ENCODE measurements at regions of chr6 and their contacts with region 1.

Region 1: DNA sequence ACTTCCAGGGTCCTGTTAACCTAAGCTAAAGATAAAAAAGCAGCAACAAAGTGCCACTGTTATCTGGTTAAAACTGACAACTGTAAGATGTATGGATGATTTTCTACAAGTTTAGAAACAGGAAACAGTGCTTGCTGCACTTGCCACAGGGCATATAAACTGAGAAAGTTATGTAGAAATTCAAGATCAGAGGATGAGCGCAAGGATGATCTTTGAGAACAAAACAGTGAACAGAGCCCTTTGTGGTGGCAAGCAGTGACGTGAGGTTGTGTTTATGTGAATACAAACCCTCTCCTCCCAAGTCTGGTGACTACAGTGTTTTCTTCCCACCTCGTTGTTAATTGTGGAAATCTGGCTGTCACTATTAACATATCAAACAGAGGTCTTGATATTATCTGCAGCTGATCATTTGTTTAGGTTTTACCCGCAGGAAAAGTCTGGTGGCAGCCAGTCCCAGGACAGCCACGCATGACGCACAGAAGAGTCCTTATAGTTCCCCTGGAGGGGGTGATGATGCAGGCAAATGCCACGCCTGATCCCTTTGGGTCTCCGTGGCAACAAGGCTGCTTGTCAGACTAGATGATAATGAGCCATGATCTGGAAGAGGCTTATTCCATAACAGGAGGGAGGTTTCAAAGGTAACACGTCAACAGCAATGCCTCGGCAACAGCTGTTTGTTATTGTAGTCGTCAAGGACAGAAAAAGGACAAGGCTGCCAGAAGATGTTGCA is 43.1 kb upstream of the TNFAIP3 start:
- DNase-seq: peak; percentile 32 to 98 (median 91)
- ATAC-seq: peak; percentile 80 to 91 (median 86)
- H3K4me3 ChIP-seq: peak overlapping the region; percentile 3 to 13
- H3K4me3 Mint-ChIP-seq: peak overlapping the region; percentile 70 to 81 (median 76)
- H3K27ac ChIP-seq: peak overlapping the region; percentile 100
- H3K27ac Mint-ChIP-seq: peak overlapping the region; percentile 95 to 97
- H3K4me1 ChIP-seq: peaks cover 56 to 57% of the 10 kb centered on the region in 2 experiments
- H3K4me1 Mint-ChIP-seq: peaks cover 79 to 90% (median 86%) of the 10 kb centered on the region in 3 donors
- H3K27me3 ChIP-seq: no peaks in the 10 kb centered on the region
- H3K27me3 Mint-ChIP-seq: no peaks in the 10 kb centered on the region

Region 2: DNA sequence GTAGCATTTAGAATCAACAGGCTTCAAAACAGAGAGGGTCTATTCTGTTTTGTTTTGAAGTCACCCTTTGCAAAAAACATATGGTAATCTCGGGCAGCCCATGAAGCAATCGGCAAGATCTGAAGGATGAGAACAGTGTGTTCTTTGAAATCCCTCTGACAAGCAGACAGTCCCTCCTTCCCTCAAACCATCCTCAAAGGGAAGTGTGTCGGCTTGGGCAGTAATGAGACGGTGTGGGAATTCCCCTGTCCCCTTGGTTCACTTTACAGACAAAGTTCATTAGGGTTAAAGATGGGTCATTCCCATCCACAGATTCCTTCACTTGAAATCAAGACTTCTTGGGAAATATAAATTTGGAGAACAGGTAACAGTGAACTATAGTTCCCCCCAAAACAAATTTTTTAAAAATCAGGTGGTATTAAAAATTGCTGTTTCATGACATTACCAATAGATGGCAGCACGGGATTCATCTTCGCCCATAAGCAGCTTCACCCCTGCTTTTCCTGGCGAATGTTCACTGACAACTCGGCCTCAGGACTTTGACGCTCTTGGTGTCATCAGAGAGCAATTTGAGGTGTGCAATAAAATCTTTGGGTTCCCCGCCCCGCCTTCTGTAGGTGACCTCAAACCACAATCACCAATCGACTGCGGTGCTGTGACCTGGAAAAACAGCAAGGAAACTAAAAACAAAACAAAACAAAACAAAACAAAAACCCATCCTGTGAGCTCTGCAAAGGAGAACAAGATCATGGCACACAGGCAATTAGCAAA is 116.2 kb before region 1 on chr6:
- CTCF ChIA-PET with region 1: interaction called, 7 to 21 read pairs
- POLR2A ChIA-PET with region 1: interaction called, 7 to 12 read pairs
- DNase-seq: peak; percentile 57 to 96 (median 88)
- ATAC-seq: peak; percentile 76 to 83 (median 80)
- H3K4me3 ChIP-seq: no peak overlapping the region
- H3K4me3 Mint-ChIP-seq: peak overlapping the region; percentile 44 to 71 (median 55)
- H3K27ac ChIP-seq: peak overlapping the region; percentile 90
- H3K27ac Mint-ChIP-seq: peak overlapping the region; percentile 96 to 98
- H3K4me1 ChIP-seq: peaks cover 19 to 48% of the 10 kb centered on the region in 2 experiments
- H3K4me1 Mint-ChIP-seq: peaks cover 45 to 68% (median 57%) of the 10 kb centered on the region in 3 donors
- H3K27me3 ChIP-seq: no peaks in the 10 kb centered on the region
- H3K27me3 Mint-ChIP-seq: no peaks in the 10 kb centered on the region

Region 3: DNA sequence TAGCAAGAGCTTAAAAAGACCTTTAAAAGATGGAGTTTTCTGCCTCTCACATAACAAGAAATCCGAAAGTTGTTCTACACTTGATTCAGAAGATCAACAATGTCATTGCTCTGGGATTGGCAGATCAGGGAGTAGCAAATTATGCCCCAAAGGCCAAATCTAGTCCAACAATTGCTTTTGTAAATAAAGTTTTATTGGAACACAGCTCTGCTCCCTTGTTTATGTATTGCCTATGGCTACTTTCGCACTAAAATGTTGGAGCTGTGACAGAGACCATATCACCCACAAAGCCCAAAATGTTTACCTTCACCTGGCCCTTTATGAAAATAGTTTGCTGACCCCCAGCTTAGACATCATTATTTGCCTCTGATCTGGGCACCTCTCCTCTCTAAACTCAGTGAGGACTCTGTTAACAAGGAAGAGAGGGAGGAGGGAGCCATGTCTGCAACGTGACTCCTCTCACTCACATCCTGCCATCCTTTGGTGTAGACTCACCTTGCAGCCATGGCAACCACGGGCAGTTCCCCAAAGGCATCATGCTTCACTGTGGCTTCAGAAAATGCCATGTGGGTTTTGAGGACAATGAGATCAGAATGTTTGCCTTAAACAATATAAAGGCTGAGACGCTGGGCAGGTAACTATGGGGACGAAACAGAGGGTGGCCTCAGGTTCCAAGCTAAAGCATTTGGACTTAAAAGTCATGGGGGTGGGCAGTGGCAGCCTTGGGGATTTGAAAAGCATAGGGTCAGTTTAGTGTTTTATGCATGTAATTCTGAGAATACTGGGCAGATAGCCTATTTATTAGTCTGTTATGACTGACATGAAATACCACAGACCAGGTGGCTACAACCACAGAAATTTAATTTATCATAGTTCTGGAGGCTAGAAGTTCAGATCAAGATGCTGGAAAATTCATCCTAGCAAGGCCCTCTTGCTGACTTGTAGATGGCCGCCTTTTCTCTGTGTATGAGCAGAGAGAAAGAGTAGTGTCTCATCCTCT is 106.6 kb before region 1 on chr6:
- CTCF ChIA-PET with region 1: interaction called in 1 of 2 experiments, 19 read pairs
- POLR2A ChIA-PET with region 1: interaction called, 11 to 43 read pairs
- DNase-seq: peak; percentile 25 to 91 (median 81)
- ATAC-seq: peak; percentile 63 to 72 (median 68)
- H3K4me3 ChIP-seq: no peak overlapping the region
- H3K4me3 Mint-ChIP-seq: peak overlapping the region in 1 of 3 donors; percentile 46
- H3K27ac ChIP-seq: peak overlapping the region; percentile 91
- H3K27ac Mint-ChIP-seq: peak overlapping the region; percentile 83 to 95
- H3K4me1 ChIP-seq: peaks cover 20 to 24% of the 10 kb centered on the region in 2 experiments
- H3K4me1 Mint-ChIP-seq: peaks cover 47 to 57% (median 50%) of the 10 kb centered on the region in 3 donors
- H3K27me3 ChIP-seq: no peaks in the 10 kb centered on the region
- H3K27me3 Mint-ChIP-seq: no peaks in the 10 kb centered on the region

Region 4: GRCh38 chr6:137811121-137811915 is 12.7 kb before region 1 on chr6:
- CTCF ChIA-PET with region 1: interaction called, 3 to 20 read pairs
- POLR2A ChIA-PET with region 1: interaction called, 7 to 65 read pairs
- DNase-seq: peak; percentile 23 to 94 (median 71)
- ATAC-seq: peak; percentile 88 to 99 (median 98)
- H3K4me3 ChIP-seq: peak overlapping the region in 1 of 2 donors; percentile 23
- H3K4me3 Mint-ChIP-seq: peak overlapping the region; percentile 21 to 62 (median 38)
- H3K27ac ChIP-seq: peak overlapping the region; percentile 92
- H3K27ac Mint-ChIP-seq: peak overlapping the region; percentile 81 to 95
- H3K4me1 ChIP-seq: peaks cover 9 to 20% of the 10 kb centered on the region in 2 experiments
- H3K4me1 Mint-ChIP-seq: peaks cover 47 to 69% (median 48%) of the 10 kb centered on the region in 3 donors
- H3K27me3 ChIP-seq: no peaks in the 10 kb centered on the region
- H3K27me3 Mint-ChIP-seq: no peaks in the 10 kb centered on the region

Region 5: DNA sequence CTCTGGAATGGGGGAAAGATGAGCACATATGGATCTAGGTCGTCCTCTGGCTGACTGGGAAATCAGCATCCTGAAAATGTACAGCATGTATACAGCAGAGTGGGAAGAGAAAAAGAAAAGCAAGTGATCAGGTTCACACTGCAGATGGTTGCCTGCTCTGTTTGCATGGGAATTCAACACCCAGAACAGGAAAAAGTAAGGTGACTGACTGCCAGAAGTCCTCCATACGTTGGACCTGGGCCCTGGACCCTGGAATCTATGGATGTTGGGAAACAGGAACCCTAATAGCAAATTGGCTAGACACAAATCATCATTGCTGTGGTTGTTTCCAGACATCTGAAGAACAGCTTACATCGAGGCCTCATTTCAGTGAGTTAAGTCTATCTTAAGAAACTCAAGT is 12.8 kb after region 1 on chr6:
- CTCF ChIA-PET with region 1: interaction called, 4 to 5 read pairs
- POLR2A ChIA-PET with region 1: interaction called, 8 to 10 read pairs
- DNase-seq: no peak
- ATAC-seq: no peak
- H3K4me3 ChIP-seq: no peak overlapping the region
- H3K4me3 Mint-ChIP-seq: no peak overlapping the region
- H3K27ac ChIP-seq: no peak overlapping the region
- H3K27ac Mint-ChIP-seq: no peak overlapping the region
- H3K4me1 ChIP-seq: no peaks in the 10 kb centered on the region
- H3K4me1 Mint-ChIP-seq: peaks cover 0 to 8% (median 3%) of the 10 kb centered on the region in 3 donors
- H3K27me3 ChIP-seq: no peaks in the 10 kb centered on the region
- H3K27me3 Mint-ChIP-seq: no peaks in the 10 kb centered on the region

Region 6: GRCh38 chr6:137866914-137867684 is 43.1 kb after region 1 on chr6 and contains the start of gene TNFAIP3:
- CTCF ChIA-PET with region 1: interaction called, 9 to 22 read pairs
- POLR2A ChIA-PET with region 1: interaction called, 33 to 185 read pairs
- DNase-seq: peak; percentile 88 to 99 (median 93)
- ATAC-seq: peak; percentile 78 to 86 (median 82)
- H3K4me3 ChIP-seq: peak within 1 kb of the TSS; percentile 90 to 100
- H3K4me3 Mint-ChIP-seq: peak within 1 kb of the TSS; percentile 92 to 98 (median 96)
- H3K27ac ChIP-seq: peak within 1 kb of the TSS; percentile 99
- H3K27ac Mint-ChIP-seq: peak within 1 kb of the TSS; percentile 95 to 98
- H3K4me1 ChIP-seq: peaks cover 30 to 37% of the 10 kb centered on the region in 2 experiments
- H3K4me1 Mint-ChIP-seq: peaks cover 61 to 69% (median 64%) of the 10 kb centered on the region in 3 donors
- H3K27me3 ChIP-seq: no peaks in the 10 kb centered on the region
- H3K27me3 Mint-ChIP-seq: no peaks in the 10 kb centered on the region
- total RNA-seq, gene TNFAIP3: 109 to 2,994 (median 145) TPM

Region 7: DNA sequence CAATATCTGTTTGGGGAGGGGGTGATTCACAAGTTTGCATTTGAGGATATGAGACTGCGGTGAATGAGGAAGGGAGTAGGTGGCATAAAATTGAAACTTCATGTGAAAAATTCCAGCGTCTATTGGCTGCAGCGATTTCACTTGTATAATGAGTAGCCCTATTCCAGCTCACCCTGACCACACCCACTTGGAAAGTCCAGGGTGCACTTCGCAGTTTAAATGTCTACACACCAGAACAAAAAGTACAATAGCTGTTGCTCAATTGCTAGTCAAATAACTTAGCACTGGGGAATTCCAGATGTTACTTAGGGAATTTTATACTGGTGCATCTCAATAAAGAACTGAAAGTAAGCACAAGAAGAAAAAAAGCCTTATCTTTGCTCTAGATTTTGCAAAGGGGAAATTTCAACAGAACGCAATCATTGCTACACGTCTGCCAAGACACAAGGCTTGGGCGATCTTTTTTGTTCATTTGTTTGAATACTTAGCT is 49.3 kb after region 1 on chr6:
- CTCF ChIA-PET with region 1: interaction called, 4 to 5 read pairs
- POLR2A ChIA-PET with region 1: interaction called, 15 to 185 read pairs
- DNase-seq: peak in 21 of 35 experiments; percentile 22 to 85 (median 47)
- ATAC-seq: peak in 2 of 4 experiments; percentile 14 to 29
- H3K4me3 ChIP-seq: peak overlapping the region in 1 of 2 donors; percentile 23
- H3K4me3 Mint-ChIP-seq: peak overlapping the region; percentile 92 to 98 (median 96)
- H3K27ac ChIP-seq: peak overlapping the region; percentile 99
- H3K27ac Mint-ChIP-seq: peak overlapping the region; percentile 95 to 98
- H3K4me1 ChIP-seq: peaks cover 40 to 44% of the 10 kb centered on the region in 2 experiments
- H3K4me1 Mint-ChIP-seq: peaks cover 89 to 92% (median 90%) of the 10 kb centered on the region in 3 donors
- H3K27me3 ChIP-seq: no peaks in the 10 kb centered on the region
- H3K27me3 Mint-ChIP-seq: no peaks in the 10 kb centered on the region